ENCODE measurements at regions of chr9 and their contacts with region 1.

Region 1: GRCh38 chr9:36166101-36166927 is 2.9 kb upstream of the CCIN start:
- DNase-seq: peak; percentile 93
- ATAC-seq: peak; percentile 94

Region 2: DNA sequence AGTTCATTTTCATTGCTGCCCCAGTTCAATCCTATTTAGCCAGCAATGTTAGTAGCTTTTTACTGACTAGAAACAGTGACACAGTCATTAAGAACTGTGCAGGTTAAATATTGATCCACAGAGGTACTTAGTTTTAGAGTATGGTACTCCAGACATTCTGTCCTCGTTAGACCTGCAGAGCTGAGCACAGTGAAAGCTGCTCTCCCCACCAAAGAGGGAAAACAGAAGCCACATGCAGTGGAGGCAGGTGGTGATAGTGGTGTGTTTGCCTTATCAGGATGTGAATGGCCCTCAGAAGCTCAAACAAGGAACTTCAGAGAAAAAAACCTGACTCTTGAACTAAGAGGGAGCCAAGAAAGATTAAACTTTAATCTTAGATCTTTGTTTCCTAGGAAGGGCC is 929.0 kb before region 1 on chr9:
- intact Hi-C with region 1: no loop called
- DNase-seq: no peak
- ATAC-seq: no peak

Region 3: GRCh38 chr9:35932735-35933134 is 233.6 kb before region 1 on chr9:
- intact Hi-C with region 1: no loop called
- DNase-seq: no peak
- ATAC-seq: no peak

Region 4: DNA sequence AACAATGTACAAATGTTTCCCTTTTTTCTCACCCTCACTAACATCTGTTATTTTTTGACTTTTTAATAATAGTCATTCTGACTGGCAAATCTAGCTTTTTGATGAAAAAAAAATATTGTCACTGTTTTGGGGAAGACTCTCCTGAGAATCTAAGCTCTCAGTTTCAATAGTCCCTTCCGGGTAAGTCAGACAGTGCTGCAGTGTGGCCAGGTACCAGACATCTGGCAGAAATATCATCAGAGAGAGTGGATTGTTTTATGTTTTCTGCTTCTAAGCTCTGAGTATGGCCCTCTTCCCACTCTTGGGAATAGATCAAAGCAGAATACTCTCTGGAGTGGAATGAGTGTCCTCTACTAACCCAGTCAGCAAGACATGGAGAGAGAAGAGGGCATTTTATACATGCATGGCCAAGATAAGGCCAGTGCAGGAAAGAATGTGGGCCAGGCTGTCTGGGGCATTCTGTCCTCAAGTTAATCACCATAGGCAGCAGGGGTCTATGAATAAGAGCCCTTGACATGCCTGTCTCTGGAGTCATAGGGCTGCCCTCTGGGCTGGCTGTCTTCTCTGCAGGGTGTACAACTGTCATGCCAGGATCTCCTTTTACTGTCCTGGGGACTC is 169.8 kb before region 1 on chr9:
- intact Hi-C with region 1: no loop called
- DNase-seq: no peak
- ATAC-seq: peak; percentile 93

Region 5: DNA sequence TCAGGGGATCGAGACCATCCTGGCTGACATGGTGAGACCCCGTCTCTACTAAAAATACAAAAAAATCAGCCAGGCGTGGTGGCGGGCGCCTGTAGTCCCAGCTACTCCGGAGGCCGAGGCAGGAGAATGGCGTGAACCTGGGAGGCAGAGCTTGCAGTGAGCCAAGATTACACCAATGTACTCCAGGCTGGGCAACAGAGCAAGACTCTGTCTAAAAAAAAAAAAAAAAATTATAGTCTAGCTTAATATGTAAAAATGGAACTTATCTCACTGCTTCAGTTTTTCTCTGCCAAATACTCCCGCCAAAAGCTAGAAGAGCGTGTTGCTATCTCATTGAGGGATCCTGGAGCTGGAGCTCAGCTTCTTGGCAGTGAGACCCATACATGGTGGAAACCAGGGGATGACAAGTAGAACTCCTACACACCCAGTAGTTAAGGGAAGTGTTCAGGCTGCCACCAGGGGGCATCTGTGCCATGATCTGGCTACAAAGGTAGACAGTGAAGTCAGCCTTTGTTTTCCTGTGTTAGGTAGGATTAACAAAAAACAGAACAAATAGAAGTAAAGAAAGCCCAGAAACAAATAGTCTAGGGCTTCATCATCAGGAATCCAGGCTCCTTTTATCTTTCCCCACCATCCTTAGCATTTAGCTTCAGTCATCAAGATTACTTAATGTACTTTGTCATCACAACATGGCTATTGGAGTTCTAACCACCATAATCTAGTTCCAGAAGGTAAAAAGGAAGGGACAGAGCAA is 63.4 kb before region 1 on chr9:
- intact Hi-C with region 1: loop called (anchors 1 kb)
- DNase-seq: peak; percentile 91
- ATAC-seq: peak; percentile 91

Region 6: DNA sequence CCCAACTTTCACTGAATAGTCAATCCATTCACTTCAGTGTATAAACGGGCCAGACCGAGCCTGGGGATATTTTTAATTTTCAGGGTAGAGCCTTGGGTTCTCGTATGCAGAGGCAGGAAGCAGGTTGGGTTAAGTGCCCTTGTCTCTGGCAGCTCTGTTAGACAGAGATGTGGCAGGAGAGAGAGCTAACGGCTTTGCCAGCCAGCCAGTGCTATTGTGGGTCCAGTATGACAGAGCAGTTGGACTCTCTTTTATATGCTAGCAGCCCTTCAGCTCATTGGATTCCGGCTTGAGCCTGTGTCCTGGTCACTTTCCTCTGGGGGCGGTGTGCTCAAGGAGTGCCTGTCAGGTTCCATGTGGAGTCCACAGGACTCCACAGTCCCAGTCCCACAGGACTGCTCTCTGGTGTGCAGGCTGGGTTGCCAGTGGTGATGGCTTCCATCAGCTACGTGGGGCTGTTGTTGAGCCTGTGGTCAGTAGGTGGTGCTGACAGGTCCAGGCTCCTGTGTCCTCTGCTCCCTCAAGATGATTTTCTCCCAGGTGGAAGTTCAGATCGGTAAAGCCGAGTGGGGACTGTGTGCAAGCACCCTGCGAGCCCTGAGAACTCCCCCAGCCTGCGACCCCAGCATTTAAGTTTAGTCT is 38.7 kb after region 1 on chr9:
- intact Hi-C with region 1: no loop called
- DNase-seq: no peak
- ATAC-seq: peak; percentile 79